HCT116 (cell line): ENCODE measurements at regions of chr2 and their contacts with region 1.

Region 1: DNA sequence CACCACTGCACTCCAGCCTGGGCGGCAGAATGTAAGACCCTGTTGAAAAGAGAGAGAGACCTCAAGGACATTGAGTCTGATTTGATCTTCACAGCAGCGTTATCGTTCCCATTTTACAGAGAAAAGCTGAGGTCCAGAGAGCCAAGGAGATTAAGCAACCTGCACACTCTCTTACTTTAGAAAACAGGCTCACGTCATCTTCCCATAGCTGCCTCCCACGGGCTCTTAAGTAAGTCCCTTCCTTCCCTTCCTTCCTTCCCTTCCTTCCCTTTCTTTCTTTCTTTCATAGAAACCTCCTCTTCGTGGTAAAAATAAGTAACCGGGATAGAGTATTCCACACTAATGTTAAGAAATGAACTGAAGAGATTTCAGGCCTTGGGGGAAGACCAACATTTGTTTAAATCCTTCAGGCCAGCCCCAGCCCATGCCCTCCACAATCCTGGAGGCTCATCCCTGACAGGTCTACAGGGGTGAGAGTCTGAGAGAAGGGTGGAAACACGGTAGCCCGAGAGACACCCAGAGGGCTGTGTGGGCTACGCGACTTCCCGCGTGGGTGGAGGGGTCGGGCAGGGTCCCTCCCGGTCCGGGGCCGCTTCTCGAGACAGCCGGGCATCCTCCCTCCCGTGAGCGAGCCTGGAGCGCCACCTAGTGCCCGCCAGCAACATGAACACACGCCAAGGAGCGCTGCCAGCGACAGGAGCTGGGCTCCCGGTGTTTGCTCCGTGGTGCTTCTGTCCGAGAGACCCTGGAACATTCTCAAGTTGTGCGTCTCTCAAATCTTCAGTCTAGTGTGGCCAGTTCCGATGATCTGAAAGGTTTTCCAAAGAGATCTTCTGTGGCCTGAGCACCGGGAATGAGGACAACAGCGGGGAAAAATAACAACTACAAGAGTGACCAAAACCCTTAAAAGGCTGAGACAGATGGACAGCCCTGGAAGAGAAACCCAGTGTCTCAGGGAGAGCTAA is 160.3 kb downstream of the INO80D start:
- DNase-seq: no peak
- ATAC-seq: peak; percentile 99
- H3K4me3 ChIP-seq: peak overlapping the region; percentile 9 to 19; a peak in 1 of 4 replicates
- H3K27ac ChIP-seq: no peak overlapping the region
- H3K4me1 ChIP-seq: peaks cover 0 to 8% of the 10 kb centered on the region in 2 experiments; a peak in 2 of 4 replicates
- H3K27me3 ChIP-seq: peaks cover 25% of the 10 kb centered on the region
- CTCF ChIP-seq: peak; percentile 85 to 93 (median 90)
- POLR2A ChIP-seq: no peak
- RAD21 ChIP-seq: peak; percentile 95

Region 2: GRCh38 chr2:204108330-204108751 is 1817.3 kb before region 1 on chr2:
- CTCF ChIA-PET with region 1: no interaction called
- POLR2A ChIA-PET with region 1: no interaction called
- RAD21 ChIA-PET with region 1: no interaction called
- intact Hi-C with region 1: loop called (anchors 10 kb)
- DNase-seq: peak; percentile 3
- ATAC-seq: peak; percentile 83
- H3K4me3 ChIP-seq: no peak overlapping the region
- H3K27ac ChIP-seq: no peak overlapping the region
- H3K4me1 ChIP-seq: no peaks in the 10 kb centered on the region
- H3K27me3 ChIP-seq: peaks cover 21% of the 10 kb centered on the region
- CTCF ChIP-seq: peak; percentile 21 to 40 (median 30); a peak in 3 of 6 replicates
- POLR2A ChIP-seq: no peak
- RAD21 ChIP-seq: peak; percentile 59

Region 3: GRCh38 chr2:204145263-204145751 is 1780.3 kb before region 1 on chr2:
- CTCF ChIA-PET with region 1: no interaction called
- POLR2A ChIA-PET with region 1: no interaction called
- RAD21 ChIA-PET with region 1: no interaction called
- intact Hi-C with region 1: loop called (anchors 5 kb)
- DNase-seq: peak; percentile 60
- ATAC-seq: peak; percentile 100
- H3K4me3 ChIP-seq: no peak overlapping the region
- H3K27ac ChIP-seq: no peak overlapping the region
- H3K4me1 ChIP-seq: no peaks in the 10 kb centered on the region
- H3K27me3 ChIP-seq: peaks cover 4% of the 10 kb centered on the region; the same call in 1 of the 2 replicates
- CTCF ChIP-seq: peak; percentile 73 to 98 (median 90)
- POLR2A ChIP-seq: no peak
- RAD21 ChIP-seq: peak; percentile 91

Region 4: GRCh38 chr2:204260162-204260877 is 1665.3 kb before region 1 on chr2:
- CTCF ChIA-PET with region 1: no interaction called
- POLR2A ChIA-PET with region 1: no interaction called
- RAD21 ChIA-PET with region 1: no interaction called
- intact Hi-C with region 1: loop called (anchors 2 kb)
- DNase-seq: peak; percentile 65
- ATAC-seq: peak; percentile 91
- H3K4me3 ChIP-seq: no peak overlapping the region
- H3K27ac ChIP-seq: no peak overlapping the region
- H3K4me1 ChIP-seq: peaks cover 3 to 9% of the 10 kb centered on the region in 2 experiments; a peak in 3 of 4 replicates
- H3K27me3 ChIP-seq: no peaks in the 10 kb centered on the region
- CTCF ChIP-seq: peak; percentile 69 to 84 (median 81)
- POLR2A ChIP-seq: no peak
- RAD21 ChIP-seq: peak; percentile 70